ENCODE measurements at regions of chr1 and their contacts with region 1.

Region 1: GRCh38 chr1:223087291-223088255 is 55.5 kb downstream of the TLR5 start:
- DNase-seq: no peak
- H3K4me3 Mint-ChIP-seq: no peak overlapping the region
- H3K27ac Mint-ChIP-seq: no peak overlapping the region
- H3K4me1 Mint-ChIP-seq: no peaks in the 10 kb centered on the region
- H3K27me3 Mint-ChIP-seq: peaks cover 52% of the 10 kb centered on the region
- CTCF ChIP-seq: no peak

Region 2: GRCh38 chr1:222732216-222733159 is 355.1 kb before region 1 on chr1:
- CTCF ChIA-PET with region 1: interaction called, 28 read pairs
- POLR2A ChIA-PET with region 1: interaction called, 4 read pairs
- intact Hi-C with region 1: no loop called
- DNase-seq: no peak
- H3K4me3 Mint-ChIP-seq: no peak overlapping the region
- H3K27ac Mint-ChIP-seq: no peak overlapping the region
- H3K4me1 Mint-ChIP-seq: no peaks in the 10 kb centered on the region
- H3K27me3 Mint-ChIP-seq: no peaks in the 10 kb centered on the region
- CTCF ChIP-seq: no peak

Region 3: GRCh38 chr1:222792744-222793143 is 294.8 kb before region 1 on chr1:
- CTCF ChIA-PET with region 1: interaction called, 488 read pairs
- POLR2A ChIA-PET with region 1: no interaction called
- intact Hi-C with region 1: loop called (anchors 1 kb)
- DNase-seq: peak; percentile 56
- H3K4me3 Mint-ChIP-seq: no peak overlapping the region
- H3K27ac Mint-ChIP-seq: no peak overlapping the region
- H3K4me1 Mint-ChIP-seq: peaks cover 18% of the 10 kb centered on the region
- H3K27me3 Mint-ChIP-seq: peaks cover 8% of the 10 kb centered on the region
- CTCF ChIP-seq: peak; percentile 81

Region 4: DNA sequence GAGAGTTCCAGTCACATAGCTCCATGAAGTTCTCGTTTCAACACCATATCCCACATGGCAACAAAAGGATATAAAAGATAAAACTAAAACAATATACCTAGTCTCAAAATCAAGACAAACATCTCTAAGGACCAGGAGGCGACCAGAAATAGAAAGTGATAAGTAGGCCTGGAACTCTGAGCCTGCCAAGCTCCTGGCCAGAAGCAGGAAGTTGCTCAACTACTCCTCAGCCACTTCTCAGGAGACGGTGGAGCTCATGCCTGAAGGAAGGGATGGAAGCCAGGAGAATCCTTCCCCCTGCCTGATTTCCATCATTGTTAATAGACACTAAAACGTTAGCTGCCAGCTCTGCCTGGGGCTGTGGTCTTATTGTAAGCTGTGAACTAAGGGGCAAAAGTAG is 178.0 kb before region 1 on chr1:
- CTCF ChIA-PET with region 1: interaction called, 12 read pairs
- POLR2A ChIA-PET with region 1: no interaction called
- intact Hi-C with region 1: no loop called
- DNase-seq: peak; percentile 78
- H3K4me3 Mint-ChIP-seq: no peak overlapping the region
- H3K27ac Mint-ChIP-seq: no peak overlapping the region
- H3K4me1 Mint-ChIP-seq: peaks cover 19% of the 10 kb centered on the region
- H3K27me3 Mint-ChIP-seq: no peaks in the 10 kb centered on the region
- CTCF ChIP-seq: no peak

Region 5: DNA sequence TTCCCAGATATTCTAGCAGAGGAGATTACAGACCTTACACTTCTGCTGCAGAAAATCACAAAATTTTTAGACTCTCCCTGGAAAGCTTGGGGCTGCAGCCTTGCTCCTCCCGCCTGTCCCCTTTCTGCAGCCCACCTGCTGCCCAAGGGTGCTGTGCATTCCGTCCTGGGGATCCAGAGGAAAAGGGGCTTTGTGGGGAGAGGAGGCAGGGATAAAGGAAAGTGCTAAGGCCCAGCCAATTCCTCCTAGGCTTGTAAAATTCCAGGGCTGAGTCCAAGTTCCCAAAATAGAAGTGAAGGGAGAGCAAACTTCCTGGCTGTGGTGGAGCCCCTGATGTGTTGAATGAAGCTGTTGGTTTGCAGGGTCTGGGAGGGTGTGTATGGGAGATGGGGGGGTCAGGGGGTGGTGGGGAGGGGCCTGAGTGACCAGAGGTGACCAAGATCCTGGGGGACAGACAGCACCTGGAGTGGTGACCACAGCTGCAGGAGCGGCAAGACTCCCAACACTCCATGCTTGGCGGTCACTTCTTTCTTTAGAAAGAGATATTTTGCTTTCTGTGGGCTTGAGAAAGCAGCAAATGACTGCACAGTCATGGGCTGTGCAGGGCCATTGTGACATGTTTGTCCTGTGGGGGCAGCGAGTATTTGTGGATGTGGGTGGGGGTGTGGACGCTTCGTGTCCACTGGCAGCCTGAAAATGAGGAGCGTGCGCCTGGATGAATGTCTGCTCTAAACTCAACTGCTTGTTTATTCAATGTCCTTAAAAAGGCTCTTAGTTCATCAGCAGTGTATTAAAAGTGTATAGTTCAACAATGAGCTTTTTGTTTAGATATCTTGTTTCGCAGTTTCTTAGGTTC is 12.9 kb before region 1 on chr1:
- CTCF ChIA-PET with region 1: interaction called, 62 read pairs
- POLR2A ChIA-PET with region 1: no interaction called
- intact Hi-C with region 1: no loop called
- DNase-seq: no peak
- H3K4me3 Mint-ChIP-seq: no peak overlapping the region
- H3K27ac Mint-ChIP-seq: no peak overlapping the region
- H3K4me1 Mint-ChIP-seq: no peaks in the 10 kb centered on the region
- H3K27me3 Mint-ChIP-seq: peaks cover 60% of the 10 kb centered on the region
- CTCF ChIP-seq: no peak

Region 6: DNA sequence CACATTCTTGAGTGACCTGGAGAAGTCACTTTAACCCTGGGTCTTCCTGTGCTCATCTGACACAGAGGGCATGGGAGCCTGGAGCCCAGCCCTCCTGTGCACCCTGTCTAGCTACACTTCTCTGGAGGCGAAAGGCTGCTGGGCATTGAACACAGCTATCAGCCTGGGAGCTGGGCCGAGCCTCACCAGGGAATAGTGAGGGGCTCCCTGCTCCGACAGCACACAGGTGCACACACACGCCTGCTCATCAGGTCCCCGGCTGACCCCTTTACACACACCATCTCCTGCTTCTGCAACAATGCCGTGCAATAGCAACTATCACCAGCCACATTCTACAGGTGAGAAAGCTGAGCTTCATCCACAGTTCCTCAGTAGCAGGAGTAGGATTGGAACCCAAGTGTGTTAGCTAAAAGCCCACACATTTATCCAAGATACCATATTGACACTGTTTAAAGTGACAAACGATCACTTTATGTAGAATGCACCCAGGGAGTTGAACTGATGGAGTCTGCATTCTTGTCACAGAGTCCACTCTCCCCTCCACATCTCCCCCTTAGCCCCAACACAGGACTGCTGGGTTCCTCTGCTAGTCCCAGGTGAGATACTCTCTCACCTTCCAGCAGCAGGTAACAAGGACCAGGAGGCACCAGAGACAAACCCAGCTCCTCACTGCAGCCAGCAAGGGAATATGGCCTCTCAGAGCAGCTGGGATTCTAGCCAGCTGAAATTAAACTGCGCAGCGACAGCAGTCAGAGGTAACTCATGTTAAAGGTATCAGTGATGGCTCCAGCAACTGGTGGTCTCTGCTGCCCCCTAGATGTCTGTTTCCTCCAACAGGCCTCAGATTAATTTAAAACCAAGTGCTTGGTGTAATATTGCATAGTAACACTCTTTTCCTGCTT is 596.3 kb after region 1 on chr1:
- CTCF ChIA-PET with region 1: interaction called, 23 read pairs
- POLR2A ChIA-PET with region 1: interaction called, 5 read pairs
- intact Hi-C with region 1: loop called (anchors 5 kb)
- DNase-seq: peak; percentile 85
- H3K4me3 Mint-ChIP-seq: no peak overlapping the region
- H3K27ac Mint-ChIP-seq: no peak overlapping the region
- H3K4me1 Mint-ChIP-seq: peaks cover 6% of the 10 kb centered on the region
- H3K27me3 Mint-ChIP-seq: no peaks in the 10 kb centered on the region
- CTCF ChIP-seq: peak; percentile 94